Prostate gland (tissue), 2 donors: ENCODE measurements at regions of chr9 and their contacts with region 1.

Region 1: GRCh38 chr9:37784616-37785483 is at the start of gene EXOSC3:
- DNase-seq: peak; percentile 85
- H3K4me3 ChIP-seq: peak within 1 kb of the TSS; percentile 55 to 85
- H3K27ac ChIP-seq: peak within 1 kb of the TSS; percentile 74 to 75
- H3K4me1 ChIP-seq: no peaks in the 10 kb centered on the region
- H3K27me3 ChIP-seq: no peaks in the 10 kb centered on the region
- CTCF ChIP-seq: peak in 2 of 4 experiments; percentile 2 to 33
- POLR2A ChIP-seq: peak; percentile 48
- total RNA-seq, gene EXOSC3: 48.5 to 54.5 TPM

Region 2: DNA sequence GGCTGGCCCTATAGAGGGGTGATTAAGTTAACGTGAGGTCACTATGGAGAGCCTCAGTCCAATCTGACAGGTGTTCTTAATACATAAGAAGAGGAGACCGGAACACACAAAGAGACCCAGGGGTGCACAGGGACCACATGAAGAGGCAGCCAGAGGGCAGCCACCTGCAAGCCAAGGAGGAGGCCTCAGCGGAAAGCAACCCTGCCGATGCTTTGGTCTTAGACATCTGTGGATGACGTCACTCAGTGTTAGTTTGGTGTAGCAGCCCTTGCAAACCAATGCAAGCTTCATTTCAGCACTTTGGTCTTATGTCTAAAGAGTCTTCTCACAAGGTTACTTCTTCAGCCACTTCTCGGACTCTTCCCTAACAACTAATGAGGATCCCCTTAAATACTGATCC is 410.0 kb before region 1 on chr9:
- intact Hi-C with region 1: no loop called
- DNase-seq: no peak
- H3K4me3 ChIP-seq: no peak overlapping the region
- H3K27ac ChIP-seq: no peak overlapping the region
- H3K4me1 ChIP-seq: no peaks in the 10 kb centered on the region
- H3K27me3 ChIP-seq: no peaks in the 10 kb centered on the region
- CTCF ChIP-seq: no peak
- POLR2A ChIP-seq: no peak

Region 3: DNA sequence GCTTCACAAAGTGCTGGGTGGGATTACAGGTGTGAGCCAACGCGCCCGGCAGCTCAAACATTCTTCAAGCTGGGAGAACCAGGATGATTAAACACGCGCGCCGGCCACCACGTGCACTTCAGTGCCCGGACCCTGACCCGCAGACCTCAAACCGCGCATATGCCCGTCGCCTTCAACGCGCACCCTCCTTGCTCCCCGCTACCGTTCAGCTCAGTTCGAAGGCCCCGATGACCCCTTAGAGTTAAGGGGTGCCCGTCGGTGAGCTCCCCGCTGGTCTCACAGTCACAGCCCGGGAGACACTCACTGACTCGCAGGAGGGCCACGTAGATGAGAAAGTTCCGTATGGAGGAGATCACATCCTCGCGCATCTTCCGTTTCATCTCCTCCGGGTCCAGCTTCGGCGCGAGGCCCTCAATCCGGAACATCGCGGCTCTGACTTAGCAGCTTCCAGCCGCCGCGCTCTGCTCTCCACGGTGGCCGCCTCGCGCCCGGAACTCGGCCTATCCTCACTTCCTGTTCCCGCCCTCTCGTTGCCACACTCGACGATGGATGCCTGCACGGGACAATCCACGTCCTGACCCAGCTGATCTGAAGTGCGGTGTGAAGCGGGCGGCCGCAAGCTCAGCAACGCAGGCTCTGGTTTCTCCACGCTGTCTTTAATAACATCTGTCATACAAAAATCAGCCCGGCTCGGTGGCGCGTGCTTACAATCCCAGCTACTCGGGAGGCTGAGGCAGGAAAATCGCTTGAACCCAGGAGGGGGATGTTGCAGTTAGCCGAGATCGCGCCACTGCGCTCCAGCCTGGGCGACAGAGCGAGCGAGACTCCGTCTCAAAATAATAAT is 192.5 kb before region 1 on chr9 and contains the start of gene TOMM5:
- intact Hi-C with region 1: loop called (anchors 10 kb)
- DNase-seq: peak; percentile 89
- H3K4me3 ChIP-seq: peak within 1 kb of the TSS; percentile 65 to 85
- H3K27ac ChIP-seq: peak within 1 kb of the TSS; percentile 73 to 80
- H3K4me1 ChIP-seq: no peaks in the 10 kb centered on the region
- H3K27me3 ChIP-seq: no peaks in the 10 kb centered on the region
- CTCF ChIP-seq: peak in 2 of 4 experiments; percentile 6 to 12
- POLR2A ChIP-seq: peak; percentile 44
- total RNA-seq, gene TOMM5: 81.2 to 82.8 TPM

Region 4: DNA sequence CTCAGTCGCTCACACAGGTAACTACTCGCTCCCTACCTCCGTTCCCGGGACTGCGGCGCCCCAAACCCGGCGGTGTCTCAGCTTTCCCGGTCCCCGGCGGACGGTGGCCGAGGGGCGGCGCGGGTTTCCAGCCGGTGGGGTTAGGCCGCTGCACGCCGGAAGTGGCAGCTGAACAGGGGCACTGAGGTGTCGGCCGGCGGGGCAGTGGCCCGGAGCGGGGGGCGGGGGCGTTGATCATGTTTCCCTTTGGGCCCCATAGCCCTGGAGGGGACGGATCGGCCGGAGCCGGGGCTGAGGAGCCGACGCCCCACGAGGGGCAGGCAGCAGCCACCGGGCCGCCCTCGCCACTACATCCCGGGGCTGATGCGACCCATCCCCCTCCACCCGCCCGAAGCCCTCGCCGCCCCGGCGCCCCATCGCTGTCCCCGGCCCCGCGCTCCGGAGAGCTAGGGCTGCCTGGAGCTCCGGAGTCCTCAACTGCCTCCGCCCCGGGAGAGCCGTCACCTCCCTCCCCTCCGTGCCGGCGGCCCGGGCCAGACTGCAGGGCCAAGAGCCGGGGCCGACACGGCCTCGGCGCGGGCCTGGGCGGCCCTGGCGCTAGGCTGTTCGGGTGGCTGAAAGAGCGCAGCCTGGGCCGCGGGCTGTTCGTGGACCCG is 15.9 kb after region 1 on chr9 and contains the start of gene DCAF10:
- intact Hi-C with region 1: loop called (anchors 1 kb)
- DNase-seq: peak; percentile 74
- H3K4me3 ChIP-seq: peak within 1 kb of the TSS; percentile 82 to 93
- H3K27ac ChIP-seq: peak within 1 kb of the TSS; percentile 82 to 86
- H3K4me1 ChIP-seq: peaks cover 3% of the 10 kb centered on the region
- H3K27me3 ChIP-seq: no peaks in the 10 kb centered on the region
- CTCF ChIP-seq: peak in 1 of 4 experiments; percentile 34
- POLR2A ChIP-seq: peak; percentile 61
- total RNA-seq, gene DCAF10: 24.2 to 30.5 TPM